CD4-positive, alpha-beta T cell (primary cell): ENCODE measurements at regions of chr12 and their contacts with region 1.

Region 1: GRCh38 chr12:26113853-26114719 is 10.8 kb downstream of the BHLHE41 start:
- DNase-seq: peak; percentile 45 to 87 (median 66)
- ATAC-seq: peak; percentile 76
- H3K4me3 ChIP-seq: peak overlapping the region; percentile 57
- H3K4me3 Mint-ChIP-seq: peak overlapping the region; percentile 87
- H3K27ac ChIP-seq: no peak overlapping the region
- H3K27ac Mint-ChIP-seq: peak overlapping the region; percentile 45
- H3K4me1 ChIP-seq: peaks cover 12% of the 10 kb centered on the region
- H3K4me1 Mint-ChIP-seq: peaks cover 4% of the 10 kb centered on the region
- H3K27me3 ChIP-seq: peaks cover 3 to 20% of the 10 kb centered on the region in 2 experiments
- H3K27me3 Mint-ChIP-seq: peaks cover 32% of the 10 kb centered on the region
- CTCF ChIP-seq: no peak

Region 2: GRCh38 chr12:25200703-25201102 is 913.4 kb before region 1 on chr12:
- CTCF ChIA-PET with region 1: no interaction called
- POLR2A ChIA-PET with region 1: no interaction called
- intact Hi-C with region 1: loop called in 1 of 2 experiments (anchors 10 kb)
- DNase-seq: no peak
- ATAC-seq: no peak
- H3K4me3 ChIP-seq: no peak overlapping the region
- H3K4me3 Mint-ChIP-seq: no peak overlapping the region
- H3K27ac ChIP-seq: no peak overlapping the region
- H3K27ac Mint-ChIP-seq: no peak overlapping the region
- H3K4me1 ChIP-seq: peaks cover 3% of the 10 kb centered on the region
- H3K4me1 Mint-ChIP-seq: peaks cover 63% of the 10 kb centered on the region
- H3K27me3 ChIP-seq: no peaks in the 10 kb centered on the region
- H3K27me3 Mint-ChIP-seq: no peaks in the 10 kb centered on the region
- CTCF ChIP-seq: no peak

Region 3: DNA sequence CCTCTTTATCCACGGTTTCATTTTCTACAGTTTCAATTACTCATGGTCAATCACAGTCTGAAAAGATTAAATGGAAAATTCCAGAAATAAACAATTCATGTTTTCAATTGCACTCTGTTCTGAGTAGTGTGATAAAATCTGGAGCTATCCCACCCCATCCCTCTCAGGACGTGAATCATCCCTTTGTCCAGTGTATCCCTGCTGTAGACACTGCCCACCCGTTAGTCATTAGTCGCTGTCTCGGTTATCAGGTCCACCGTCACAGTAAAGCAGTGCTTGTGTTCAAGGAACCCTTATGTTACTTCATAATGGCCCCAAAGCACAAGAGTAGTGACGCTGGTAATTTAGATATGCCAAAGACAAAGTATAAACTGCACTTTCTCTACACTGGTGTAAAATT is 420.0 kb before region 1 on chr12:
- CTCF ChIA-PET with region 1: no interaction called
- POLR2A ChIA-PET with region 1: no interaction called
- intact Hi-C with region 1: no loop called
- DNase-seq: no peak
- ATAC-seq: no peak
- H3K4me3 ChIP-seq: no peak overlapping the region
- H3K4me3 Mint-ChIP-seq: no peak overlapping the region
- H3K27ac ChIP-seq: no peak overlapping the region
- H3K27ac Mint-ChIP-seq: no peak overlapping the region
- H3K4me1 ChIP-seq: no peaks in the 10 kb centered on the region
- H3K4me1 Mint-ChIP-seq: no peaks in the 10 kb centered on the region
- H3K27me3 ChIP-seq: no peaks in the 10 kb centered on the region
- H3K27me3 Mint-ChIP-seq: no peaks in the 10 kb centered on the region
- CTCF ChIP-seq: no peak